Dendritic cell treated with granulocyte-macrophage colony-stimulating factor and Interleukin-4, amounts not matched to agents 40 ng/mL and 50 ng/mL, for 4 days (primary cell): ENCODE measurements at regions of chr17 and their contacts with region 1.

Region 1: DNA sequence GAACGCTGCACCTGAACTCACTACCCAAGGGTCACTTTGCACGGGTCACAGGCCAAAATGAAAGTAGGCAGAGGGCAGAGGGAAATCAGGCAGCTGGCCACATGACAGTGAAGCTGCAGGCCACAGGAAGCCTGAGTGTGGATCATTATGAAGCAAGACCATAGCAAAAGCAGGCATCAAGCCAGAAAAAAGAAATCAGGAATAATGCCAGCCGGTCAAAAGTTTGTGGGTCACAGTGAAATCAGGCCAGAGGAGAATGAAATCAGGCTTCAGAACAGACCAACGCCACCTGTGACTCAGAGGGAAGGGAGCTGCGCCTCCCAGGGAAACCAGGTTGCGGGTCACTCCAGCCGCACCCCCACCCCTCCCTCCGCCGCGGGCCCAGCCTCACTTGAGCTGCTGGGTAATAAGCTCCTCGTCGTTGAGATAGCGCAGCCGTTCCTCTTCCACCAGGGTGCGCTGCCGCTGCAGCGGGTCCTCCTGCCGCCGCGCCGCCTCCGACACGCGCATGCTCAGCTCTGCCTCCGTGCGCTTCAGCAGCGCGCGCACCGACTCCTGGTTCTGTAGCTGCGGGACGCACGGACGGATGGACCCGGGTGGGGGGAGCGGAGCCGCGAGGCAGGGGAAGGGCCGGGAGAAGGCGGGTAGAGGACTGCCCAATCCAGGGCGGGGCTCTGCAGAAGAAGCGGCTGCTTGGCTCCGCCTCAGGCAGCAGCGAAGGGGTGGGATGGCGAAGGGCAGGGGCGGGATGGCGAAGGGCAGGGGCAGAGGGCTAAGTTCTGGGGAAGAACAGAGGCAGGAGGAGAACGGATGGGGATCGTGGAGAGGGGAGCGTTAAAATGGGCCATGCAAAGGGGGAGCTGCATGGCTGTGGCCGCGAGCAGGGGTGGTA is 47.7 kb downstream of the SRCIN1 start:
- H3K4me3 Mint-ChIP-seq: peak overlapping the region; percentile 61
- H3K27ac Mint-ChIP-seq: peak overlapping the region; percentile 10
- H3K4me1 Mint-ChIP-seq: peaks cover 55% of the 10 kb centered on the region
- H3K27me3 Mint-ChIP-seq: peaks cover 83% of the 10 kb centered on the region

Region 2: DNA sequence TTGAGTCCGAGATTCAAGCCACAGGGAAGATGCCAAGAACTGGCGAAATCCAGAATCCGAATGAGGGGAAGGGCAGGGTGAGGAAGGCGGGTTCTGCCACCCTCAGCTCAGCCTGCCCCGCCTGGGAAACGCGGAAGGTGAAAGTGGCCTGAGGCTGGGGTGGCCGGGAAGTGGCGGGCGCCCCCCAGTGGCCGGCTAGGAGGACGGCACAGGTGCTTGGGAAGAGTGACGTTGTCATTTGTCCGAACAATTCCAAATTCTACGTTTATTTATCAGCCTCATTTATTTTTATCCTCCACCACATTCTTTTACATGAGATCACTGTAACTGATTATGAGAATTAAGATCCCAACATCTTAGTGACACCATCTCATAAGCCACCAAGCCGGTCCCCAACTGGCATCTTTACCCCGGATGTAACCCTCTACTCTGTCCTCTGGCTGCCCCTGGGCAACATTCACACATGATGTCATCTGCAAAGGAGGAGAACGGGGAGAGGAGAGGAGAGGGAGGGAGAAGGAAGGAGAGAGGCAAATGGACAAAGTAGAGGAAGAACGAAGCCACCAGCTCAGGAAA is 26.4 kb after region 1 on chr17:
- intact Hi-C with region 1: loop called (anchors 2 kb)
- H3K4me3 Mint-ChIP-seq: no peak overlapping the region
- H3K27ac Mint-ChIP-seq: no peak overlapping the region
- H3K4me1 Mint-ChIP-seq: peaks cover 38% of the 10 kb centered on the region
- H3K27me3 Mint-ChIP-seq: peaks cover 96% of the 10 kb centered on the region

Region 3: GRCh38 chr17:38598536-38598935 is 40.5 kb after region 1 on chr17:
- intact Hi-C with region 1: loop called (anchors 5 kb)
- H3K4me3 Mint-ChIP-seq: no peak overlapping the region
- H3K27ac Mint-ChIP-seq: no peak overlapping the region
- H3K4me1 Mint-ChIP-seq: peaks cover 19% of the 10 kb centered on the region
- H3K27me3 Mint-ChIP-seq: peaks cover 100% of the 10 kb centered on the region

Region 4: DNA sequence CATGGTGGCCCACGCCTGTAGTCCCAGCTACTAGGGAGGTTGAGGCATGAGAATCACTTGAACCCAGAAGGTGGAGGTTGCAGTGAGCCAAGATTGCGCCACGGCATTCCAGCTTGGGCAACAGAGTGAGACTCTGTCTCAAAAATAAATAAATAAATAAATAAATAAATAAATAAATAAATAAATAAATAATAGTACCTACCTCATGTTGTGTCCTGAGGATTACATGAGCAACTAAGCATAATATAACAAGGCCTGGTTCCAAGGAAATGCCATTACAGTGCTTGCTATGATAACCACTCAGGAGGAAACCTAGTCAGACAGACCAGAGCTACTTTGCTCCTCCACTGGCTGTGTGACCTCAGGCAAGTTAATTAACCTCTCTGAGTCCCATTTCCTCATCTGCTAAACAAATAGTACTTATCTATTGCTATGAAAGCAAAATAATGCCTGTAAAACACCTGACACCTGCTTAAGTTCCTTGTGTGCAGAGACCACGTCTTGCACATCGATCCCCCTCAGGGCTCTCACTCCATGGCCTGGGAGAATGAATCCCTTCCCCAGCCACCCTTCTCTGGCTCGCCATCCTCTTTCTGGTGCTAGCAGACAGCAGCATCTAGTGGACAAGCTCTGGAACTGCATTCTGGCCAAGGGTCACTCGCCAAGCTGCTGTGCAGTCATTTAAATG is 109.2 kb after region 1 on chr17:
- intact Hi-C with region 1: loop called (anchors 2 kb)
- H3K4me3 Mint-ChIP-seq: no peak overlapping the region
- H3K27ac Mint-ChIP-seq: no peak overlapping the region
- H3K4me1 Mint-ChIP-seq: peaks cover 41% of the 10 kb centered on the region
- H3K27me3 Mint-ChIP-seq: peaks cover 77% of the 10 kb centered on the region

Region 5: DNA sequence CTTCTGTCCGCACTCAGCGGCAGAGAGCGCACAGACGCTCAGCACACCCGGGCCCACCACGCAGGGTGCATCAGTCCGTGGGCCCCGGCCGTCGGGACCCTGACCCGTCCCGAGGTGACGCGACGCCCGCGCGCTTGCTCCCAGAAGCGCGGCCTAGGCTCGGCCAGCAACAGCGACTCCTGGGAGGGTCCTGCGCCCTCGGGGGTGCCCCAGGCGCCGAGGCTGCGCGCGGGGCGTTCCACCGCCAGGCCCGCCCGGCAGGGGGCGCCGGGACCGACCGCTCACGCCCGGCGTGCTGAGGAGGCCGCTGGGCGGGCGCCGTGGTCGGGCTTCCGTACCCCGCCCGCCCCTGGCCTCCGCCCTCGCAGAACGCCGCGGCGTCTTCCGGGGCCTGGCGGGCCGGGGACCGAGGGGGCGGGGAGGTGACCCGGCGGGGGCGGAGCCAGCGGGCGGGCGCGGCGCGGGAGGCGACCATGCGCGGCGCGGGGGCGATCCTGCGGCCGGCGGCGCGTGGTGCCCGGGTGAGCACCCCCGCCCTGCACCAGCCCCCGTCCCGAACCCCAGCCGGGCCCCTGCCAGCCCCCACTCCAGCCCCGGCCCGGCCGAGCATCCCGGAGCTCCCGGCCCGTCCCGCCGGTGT is 171.9 kb after region 1 on chr17 and contains the start of gene CISD3:
- intact Hi-C with region 1: loop called (anchors 10 kb)
- H3K4me3 Mint-ChIP-seq: peak within 1 kb of the TSS; percentile 90
- H3K27ac Mint-ChIP-seq: peak within 1 kb of the TSS; percentile 89
- H3K4me1 Mint-ChIP-seq: peaks cover 86% of the 10 kb centered on the region
- H3K27me3 Mint-ChIP-seq: no peaks in the 10 kb centered on the region

Region 6: GRCh38 chr17:39429600-39429999 is 871.5 kb after region 1 on chr17:
- intact Hi-C with region 1: no loop called
- H3K4me3 Mint-ChIP-seq: no peak overlapping the region
- H3K27ac Mint-ChIP-seq: no peak overlapping the region
- H3K4me1 Mint-ChIP-seq: no peaks in the 10 kb centered on the region
- H3K27me3 Mint-ChIP-seq: no peaks in the 10 kb centered on the region